ENCODE measurements at regions of chr2 and their contacts with region 1.

Region 1: GRCh38 chr2:40371525-40372282 is 80.2 kb downstream of the SLC8A1 start:
- DNase-seq: no peak
- H3K4me3 ChIP-seq: no peak overlapping the region
- H3K27ac ChIP-seq: peak overlapping the region in 1 of 2 donors; percentile 20
- H3K4me1 ChIP-seq: no peaks in the 10 kb centered on the region
- H3K27me3 ChIP-seq: no peaks in the 10 kb centered on the region
- CTCF ChIP-seq: no peak
- POLR2A ChIP-seq: no peak

Region 2: GRCh38 chr2:40451918-40452605 is 80.4 kb after region 1 on chr2 and contains the start of gene SLC8A1:
- intact Hi-C with region 1: loop called (anchors 5 kb)
- DNase-seq: no peak
- H3K4me3 ChIP-seq: peak within 1 kb of the TSS; percentile 31 to 39
- H3K27ac ChIP-seq: peak within 1 kb of the TSS; percentile 57 to 72
- H3K4me1 ChIP-seq: no peaks in the 10 kb centered on the region
- H3K27me3 ChIP-seq: no peaks in the 10 kb centered on the region
- CTCF ChIP-seq: no peak
- POLR2A ChIP-seq: no peak
- total RNA-seq, gene SLC8A1: 23.2 to 28.2 TPM

Measured in prostate gland (tissue), 2 donors.